K562 (cell line): ENCODE measurements at regions of chr6 and their contacts with region 1.

Region 1: DNA sequence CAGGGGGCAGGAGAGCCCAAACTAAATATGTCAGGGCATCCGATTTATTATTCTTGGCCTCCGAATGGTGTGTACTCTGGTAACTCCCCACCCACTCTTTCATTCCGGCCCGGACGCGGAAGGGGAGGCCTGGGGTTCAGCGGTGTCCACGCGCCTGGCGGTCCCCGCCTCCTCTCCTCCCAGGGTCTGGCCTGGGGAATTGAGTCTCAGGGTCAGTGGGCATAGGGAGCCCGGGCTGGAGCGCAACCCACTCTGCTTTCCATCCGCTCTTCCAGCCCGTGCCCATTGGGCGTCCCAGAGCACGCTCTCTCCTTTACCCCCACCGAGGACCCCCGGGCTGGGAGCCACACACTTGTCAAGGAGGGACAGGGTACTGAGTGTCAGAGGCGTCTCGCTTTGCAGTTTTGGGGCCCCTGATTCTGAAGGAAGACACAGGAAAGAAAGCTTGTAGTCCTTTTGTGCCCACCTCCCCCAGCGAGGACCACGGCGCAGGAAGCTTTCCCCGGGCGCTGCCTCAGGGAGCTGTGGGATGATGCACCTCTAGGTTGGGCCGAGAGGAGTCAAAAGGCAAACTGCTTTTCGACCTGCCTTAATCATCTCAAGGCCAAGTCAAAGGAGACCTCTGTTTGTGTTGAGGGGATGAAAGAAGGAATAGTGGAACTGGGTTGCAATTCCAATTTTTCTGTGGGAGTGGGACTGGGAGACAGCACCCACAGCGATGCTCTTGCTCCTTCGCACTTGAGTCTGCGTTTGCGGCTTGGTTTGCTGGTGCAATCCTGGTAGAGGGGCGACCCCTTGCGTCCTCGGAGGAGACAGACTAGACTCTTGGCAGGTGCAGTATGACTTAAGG is 2.5 kb downstream of the RSPO3 start:
- DNase-seq: peak; percentile 55 to 75 (median 56)
- ATAC-seq: peak; percentile 98
- H3K4me3 ChIP-seq: no peak overlapping the region
- H3K27ac ChIP-seq: no peak overlapping the region
- H3K4me1 ChIP-seq: peaks cover 0 to 12% of the 10 kb centered on the region in 2 experiments; a peak in 1 of 5 replicates
- H3K27me3 ChIP-seq: peaks cover 0 to 14% of the 10 kb centered on the region in 2 experiments; a peak in 3 of 5 replicates
- CTCF ChIP-seq: peak; percentile 73 to 80 (median 74)
- EP300 ChIP-seq: no peak
- POLR2A ChIP-seq: no peak
- RAD21 ChIP-seq: peak; percentile 81 to 85

Region 2: GRCh38 chr6:125995972-125996580 is 1124.9 kb before region 1 on chr6:
- CTCF ChIA-PET with region 1: no interaction called
- POLR2A ChIA-PET with region 1: no interaction called
- in situ Hi-C with region 1: no loop called
- intact Hi-C with region 1: loop called (anchors 2 kb)
- DNase-seq: peak; percentile 70 to 82 (median 74)
- ATAC-seq: peak; percentile 93
- H3K4me3 ChIP-seq: no peak overlapping the region
- H3K27ac ChIP-seq: no peak overlapping the region
- H3K4me1 ChIP-seq: peaks cover 0 to 4% of the 10 kb centered on the region in 2 experiments; a peak in 1 of 5 replicates
- H3K27me3 ChIP-seq: no peaks in the 10 kb centered on the region
- CTCF ChIP-seq: peak; percentile 85 to 97 (median 93)
- EP300 ChIP-seq: no peak
- POLR2A ChIP-seq: no peak
- RAD21 ChIP-seq: peak; percentile 80 to 88

Region 3: GRCh38 chr6:126033696-126034095 is 1087.3 kb before region 1 on chr6:
- CTCF ChIA-PET with region 1: no interaction called
- POLR2A ChIA-PET with region 1: no interaction called
- in situ Hi-C with region 1: loop called (anchors 25 kb)
- intact Hi-C with region 1: loop called (anchors 5 kb)
- DNase-seq: peak; percentile 28 to 76 (median 51)
- ATAC-seq: peak; percentile 99
- H3K4me3 ChIP-seq: no peak overlapping the region
- H3K27ac ChIP-seq: peak overlapping the region; percentile 18; the same call in 1 of the 3 replicates
- H3K4me1 ChIP-seq: peaks cover 0 to 8% of the 10 kb centered on the region in 2 experiments; a peak in 2 of 5 replicates
- H3K27me3 ChIP-seq: no peaks in the 10 kb centered on the region
- CTCF ChIP-seq: peak; percentile 60 to 81 (median 75)
- EP300 ChIP-seq: no peak
- POLR2A ChIP-seq: no peak
- RAD21 ChIP-seq: peak; percentile 95

Region 4: DNA sequence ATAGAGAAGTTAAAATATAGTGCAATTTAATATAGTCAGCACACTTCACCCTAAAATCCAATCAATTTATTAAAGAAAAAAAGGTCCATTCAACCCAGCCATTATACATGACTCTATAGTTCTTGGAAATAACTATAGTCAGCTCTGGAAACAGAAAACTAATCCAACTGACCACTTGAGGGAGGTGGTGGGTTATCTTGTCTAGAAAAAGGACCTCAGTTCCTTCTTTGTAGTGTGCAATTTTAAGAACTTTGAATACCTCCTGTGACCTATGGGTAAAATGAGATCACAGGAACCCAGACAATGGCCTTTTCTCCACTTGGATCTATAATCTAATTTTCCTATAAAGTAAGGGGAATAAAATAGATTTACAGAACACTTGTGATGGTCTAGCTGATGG is 944.7 kb before region 1 on chr6:
- CTCF ChIA-PET with region 1: no interaction called
- POLR2A ChIA-PET with region 1: no interaction called
- in situ Hi-C with region 1: no loop called
- intact Hi-C with region 1: loop called (anchors 1 kb)
- DNase-seq: peak in 2 of 4 experiments; percentile 23 to 41
- ATAC-seq: peak; percentile 89
- H3K4me3 ChIP-seq: no peak overlapping the region
- H3K27ac ChIP-seq: no peak overlapping the region
- H3K4me1 ChIP-seq: peaks cover 0 to 2% of the 10 kb centered on the region in 2 experiments; a peak in 2 of 5 replicates
- H3K27me3 ChIP-seq: no peaks in the 10 kb centered on the region
- CTCF ChIP-seq: peak; percentile 38 to 67 (median 54); a peak in 5 of 6 replicates
- EP300 ChIP-seq: no peak
- POLR2A ChIP-seq: no peak
- RAD21 ChIP-seq: peak; percentile 72 to 85

Region 5: DNA sequence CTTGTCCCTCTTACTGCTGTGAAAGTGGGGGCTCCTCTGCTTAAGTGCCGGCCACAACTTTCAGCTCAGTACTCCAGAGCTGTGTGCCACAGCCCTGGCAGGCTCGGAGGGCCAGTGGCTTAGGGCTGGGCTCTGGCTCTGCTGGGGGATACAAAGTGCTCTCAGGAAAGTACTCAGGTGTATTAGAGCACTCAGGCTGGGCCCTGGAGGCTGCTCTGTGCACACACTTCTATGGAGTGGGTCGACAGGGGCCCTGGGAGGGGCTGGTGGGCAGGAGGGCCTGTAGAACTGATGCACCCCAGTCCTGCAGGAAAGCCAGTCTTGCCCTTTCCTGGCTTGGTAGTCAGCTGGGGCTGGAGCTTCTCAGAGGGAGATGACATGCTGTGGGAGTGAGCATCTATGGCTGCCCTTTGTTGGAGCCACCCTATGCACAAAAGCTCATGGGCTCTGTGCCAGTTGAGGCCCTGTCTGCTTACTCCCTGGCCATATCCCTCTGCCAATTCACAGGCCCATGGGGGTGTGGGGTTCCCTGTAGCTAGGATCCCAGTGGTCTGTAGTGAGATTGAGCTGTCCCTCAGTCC is 759.1 kb before region 1 on chr6:
- CTCF ChIA-PET with region 1: no interaction called
- POLR2A ChIA-PET with region 1: interaction called, 3 read pairs
- in situ Hi-C with region 1: no loop called
- intact Hi-C with region 1: loop called (anchors 2 kb)
- DNase-seq: no peak
- ATAC-seq: peak; percentile 42
- H3K4me3 ChIP-seq: no peak overlapping the region
- H3K27ac ChIP-seq: no peak overlapping the region
- H3K4me1 ChIP-seq: no peaks in the 10 kb centered on the region
- H3K27me3 ChIP-seq: no peaks in the 10 kb centered on the region
- CTCF ChIP-seq: no peak
- EP300 ChIP-seq: no peak
- POLR2A ChIP-seq: no peak
- RAD21 ChIP-seq: no peak

Region 6: GRCh38 chr6:126848119-126848518 is 272.9 kb before region 1 on chr6:
- CTCF ChIA-PET with region 1: no interaction called
- POLR2A ChIA-PET with region 1: no interaction called
- in situ Hi-C with region 1: no loop called
- intact Hi-C with region 1: no loop called
- DNase-seq: no peak
- ATAC-seq: no peak
- H3K4me3 ChIP-seq: no peak overlapping the region
- H3K27ac ChIP-seq: no peak overlapping the region
- H3K4me1 ChIP-seq: no peaks in the 10 kb centered on the region
- H3K27me3 ChIP-seq: no peaks in the 10 kb centered on the region
- CTCF ChIP-seq: no peak
- EP300 ChIP-seq: no peak
- POLR2A ChIP-seq: no peak
- RAD21 ChIP-seq: no peak

Region 7: GRCh38 chr6:126976253-126976797 is 144.7 kb before region 1 on chr6:
- CTCF ChIA-PET with region 1: no interaction called
- POLR2A ChIA-PET with region 1: no interaction called
- in situ Hi-C with region 1: no loop called
- intact Hi-C with region 1: no loop called
- DNase-seq: no peak
- ATAC-seq: no peak
- H3K4me3 ChIP-seq: no peak overlapping the region
- H3K27ac ChIP-seq: no peak overlapping the region
- H3K4me1 ChIP-seq: no peaks in the 10 kb centered on the region
- H3K27me3 ChIP-seq: no peaks in the 10 kb centered on the region
- CTCF ChIP-seq: no peak
- EP300 ChIP-seq: no peak
- POLR2A ChIP-seq: no peak
- RAD21 ChIP-seq: no peak